Activated T-helper 2 cell treated with anti-CD3 and anti-CD28 coated beads, Interferon-gamma antibody, Interleukin-2, Interleukin-4, amounts not matched to agents 10 μg/mL and 5 μg/mL and 100 μg/mL, durations not matched to agents 14 hours and 24 hours and 36 hours (primary cell): ENCODE measurements at regions of chr12 and their contacts with region 1.

Region 1: GRCh38 chr12:113462117-113462774 is 9.4 kb downstream of the LHX5 start:
- DNase-seq: peak; percentile 46
- H3K4me3 Mint-ChIP-seq: peak overlapping the region; percentile 31
- H3K27ac Mint-ChIP-seq: peak overlapping the region; percentile 31
- H3K4me1 Mint-ChIP-seq: peaks cover 12% of the 10 kb centered on the region
- H3K27me3 Mint-ChIP-seq: peaks cover 53% of the 10 kb centered on the region

Region 2: DNA sequence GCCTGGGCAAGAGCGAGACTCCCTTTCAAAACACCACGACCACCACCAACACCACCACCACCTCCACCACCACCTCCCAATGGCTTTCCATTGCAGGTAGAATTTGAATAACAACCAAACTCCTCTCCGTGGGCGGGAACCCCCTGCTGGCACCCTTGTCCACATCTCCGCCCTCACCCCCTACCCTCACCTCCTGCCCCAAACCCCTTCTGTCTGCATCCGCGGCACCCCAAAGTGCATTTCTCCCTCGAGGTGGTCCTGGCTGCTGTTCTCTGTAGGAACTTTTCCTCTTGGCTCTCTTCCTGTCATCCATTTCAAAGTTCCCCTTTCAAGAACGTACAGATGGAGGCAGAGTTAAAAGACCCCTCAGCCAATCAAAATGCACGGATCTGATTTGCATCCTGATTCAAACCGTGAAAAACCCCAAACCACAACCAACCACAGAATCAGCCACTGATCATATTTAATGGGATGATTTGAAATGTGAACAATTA is 36.2 kb before region 1 on chr12:
- intact Hi-C with region 1: no loop called
- DNase-seq: no peak
- H3K4me3 Mint-ChIP-seq: no peak overlapping the region
- H3K27ac Mint-ChIP-seq: no peak overlapping the region
- H3K4me1 Mint-ChIP-seq: peaks cover 7% of the 10 kb centered on the region
- H3K27me3 Mint-ChIP-seq: peaks cover 5% of the 10 kb centered on the region

Region 3: DNA sequence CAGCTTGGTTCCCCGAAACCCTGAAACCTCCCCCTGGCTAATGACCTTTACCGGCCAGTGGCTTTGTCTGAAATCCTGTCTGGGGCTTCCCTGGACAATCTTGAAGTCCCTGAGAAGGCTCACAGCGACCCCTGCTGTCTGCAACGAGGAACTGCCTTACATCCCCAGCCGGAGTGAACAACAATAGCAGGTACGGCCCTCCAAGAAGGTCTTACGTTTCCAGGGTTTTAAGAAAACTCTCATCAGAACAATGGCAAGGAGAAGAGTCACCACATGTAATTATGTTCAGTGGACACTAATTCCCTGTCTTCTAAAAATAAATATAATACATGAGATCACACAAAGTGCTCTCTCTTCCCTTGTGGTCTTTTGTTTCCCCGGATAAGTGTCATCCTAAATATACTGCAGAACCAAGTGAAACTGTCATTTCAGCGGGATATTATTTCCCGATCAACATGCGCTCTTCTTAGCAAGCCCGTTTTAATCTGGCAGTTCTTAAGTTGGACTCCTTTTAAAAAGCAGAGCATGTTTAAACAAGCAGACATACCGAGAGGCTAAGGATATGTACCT is 450.6 kb after region 1 on chr12:
- intact Hi-C with region 1: loop called (anchors 5 kb)
- DNase-seq: peak; percentile 22
- H3K4me3 Mint-ChIP-seq: no peak overlapping the region
- H3K27ac Mint-ChIP-seq: no peak overlapping the region
- H3K4me1 Mint-ChIP-seq: no peaks in the 10 kb centered on the region
- H3K27me3 Mint-ChIP-seq: no peaks in the 10 kb centered on the region